ENCODE measurements at regions of chr3 and their contacts with region 1.

Region 1: DNA sequence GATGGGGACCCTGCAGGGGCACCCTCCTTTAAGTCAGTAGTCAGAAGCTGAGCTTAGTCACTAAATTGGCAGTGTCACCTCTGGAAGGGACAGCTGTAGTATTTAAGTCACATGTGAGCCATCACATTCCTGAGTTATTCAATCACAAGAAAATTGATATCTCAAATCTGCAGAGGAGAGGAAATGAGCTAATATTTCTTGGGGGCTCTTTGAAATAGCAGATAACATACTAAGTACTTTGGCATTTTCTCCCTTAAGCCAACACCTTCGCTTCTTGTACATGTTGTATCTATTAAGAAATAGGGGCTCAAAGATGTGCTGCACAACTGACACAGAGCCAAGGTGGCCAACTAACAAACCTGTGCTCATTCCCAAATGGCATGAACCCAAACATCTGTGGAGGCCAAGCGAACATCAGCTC is 63.1 kb downstream of the ABHD5 start:
- DNase-seq: no peak
- H3K4me3 Mint-ChIP-seq: no peak overlapping the region
- H3K27ac Mint-ChIP-seq: no peak overlapping the region
- H3K4me1 Mint-ChIP-seq: peaks cover 38% of the 10 kb centered on the region
- H3K27me3 Mint-ChIP-seq: peaks cover 11% of the 10 kb centered on the region
- CTCF ChIP-seq: no peak

Region 2: DNA sequence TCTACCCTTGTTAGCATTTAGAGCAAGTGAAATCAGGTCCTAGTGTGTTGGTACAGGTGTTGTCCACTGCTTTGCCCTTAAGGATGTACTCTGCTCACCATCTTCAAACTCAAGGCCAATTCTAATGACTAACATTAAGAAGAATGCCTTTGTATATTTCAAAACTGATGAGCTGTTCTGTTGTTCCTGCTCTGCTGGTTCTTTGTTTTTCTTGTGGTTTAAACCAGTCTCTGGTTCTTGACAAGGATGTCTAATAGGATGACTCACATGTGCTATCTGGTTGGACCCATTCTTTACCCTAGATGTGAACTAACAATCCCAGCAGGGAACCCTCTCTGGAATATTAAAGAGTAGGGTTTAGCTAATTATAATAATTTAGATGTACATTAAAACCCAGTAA is 45.8 kb before region 1 on chr3:
- CTCF ChIA-PET with region 1: no interaction called
- intact Hi-C with region 1: loop called (anchors 5 kb)
- DNase-seq: peak; percentile 15
- H3K4me3 Mint-ChIP-seq: no peak overlapping the region
- H3K27ac Mint-ChIP-seq: peak overlapping the region; percentile 42
- H3K4me1 Mint-ChIP-seq: peaks cover 12% of the 10 kb centered on the region
- H3K27me3 Mint-ChIP-seq: no peaks in the 10 kb centered on the region
- CTCF ChIP-seq: no peak

Region 3: GRCh38 chr3:45537970-45538640 is 1784.3 kb after region 1 on chr3:
- CTCF ChIA-PET with region 1: no interaction called
- intact Hi-C with region 1: no loop called
- DNase-seq: no peak
- H3K4me3 Mint-ChIP-seq: no peak overlapping the region
- H3K27ac Mint-ChIP-seq: no peak overlapping the region
- H3K4me1 Mint-ChIP-seq: no peaks in the 10 kb centered on the region
- H3K27me3 Mint-ChIP-seq: no peaks in the 10 kb centered on the region
- CTCF ChIP-seq: no peak